HepG2 (cell line): ENCODE measurements at regions of chr1 and their contacts with region 1.

Region 1: DNA sequence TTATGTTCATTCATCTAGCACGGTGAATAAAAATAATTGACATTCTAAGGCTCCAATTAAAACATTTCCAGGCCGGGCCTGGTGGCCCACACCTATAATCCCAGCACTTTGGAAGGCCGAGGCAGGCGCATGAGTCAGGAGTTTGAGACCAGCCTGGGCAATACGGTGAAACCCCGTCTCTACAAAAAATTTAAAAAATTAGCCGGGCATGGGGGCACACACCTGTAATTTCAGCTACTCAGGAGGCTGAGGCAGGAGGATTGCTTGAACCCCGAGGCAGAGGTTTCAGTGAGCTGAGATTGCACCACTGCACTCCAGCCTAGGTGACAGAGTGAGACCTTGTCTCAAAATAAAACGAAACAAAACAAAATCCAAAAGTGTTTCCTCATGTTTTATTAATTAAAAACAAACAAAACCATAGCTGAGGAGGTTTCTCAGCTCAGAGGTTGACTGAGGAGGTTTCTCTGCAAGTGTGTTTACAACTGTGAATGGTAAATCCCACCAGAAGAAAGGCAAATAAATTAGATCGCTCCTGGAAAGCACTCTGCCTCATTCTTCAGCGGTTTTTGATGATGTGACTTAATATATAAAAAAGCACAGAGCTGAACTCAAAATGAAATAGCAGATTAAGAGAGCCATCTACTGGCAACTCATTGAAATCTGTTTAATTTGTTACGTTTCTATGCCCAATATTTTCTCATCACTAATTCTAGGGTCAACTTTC is 37.7 kb upstream of the ATG4C start:
- DNase-seq: peak; percentile 48
- ATAC-seq: no peak; the same call in 2 of the 3 replicates
- H3K4me3 ChIP-seq: no peak overlapping the region
- H3K27ac ChIP-seq: no peak overlapping the region
- H3K4me1 ChIP-seq: peaks cover 10% of the 10 kb centered on the region; the same call in 1 of the 2 replicates
- H3K27me3 ChIP-seq: no peaks in the 10 kb centered on the region
- CTCF ChIP-seq: peak; percentile 64
- EP300 ChIP-seq: no peak
- POLR2A ChIP-seq: no peak
- RAD21 ChIP-seq: peak; percentile 71

Region 2: DNA sequence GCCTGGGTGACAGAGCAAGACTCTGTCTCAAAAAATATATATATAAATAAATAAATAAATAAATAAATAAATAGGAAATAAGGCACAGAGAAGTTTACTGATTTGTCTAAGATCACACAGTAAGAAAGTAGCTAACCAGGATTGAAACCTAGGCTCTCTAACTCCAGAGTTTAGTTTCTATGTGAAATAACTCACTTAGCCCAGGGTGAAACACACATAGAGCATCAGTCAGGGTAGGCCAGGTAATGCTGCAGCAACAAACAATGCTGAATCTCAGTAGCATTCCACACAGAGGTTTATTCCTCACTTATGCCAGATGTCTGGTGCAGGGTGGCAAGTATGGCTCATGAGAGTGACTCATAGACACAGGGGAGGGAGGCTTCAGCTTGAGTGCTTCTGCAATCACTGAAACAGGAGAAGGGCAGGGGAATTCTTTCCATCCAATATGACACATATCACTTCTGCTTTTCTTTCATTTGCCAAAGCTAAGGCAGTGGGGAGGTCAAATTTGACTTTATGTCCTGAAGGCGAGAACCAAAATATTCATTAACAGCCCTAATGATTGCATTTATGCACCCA is 389.9 kb before region 1 on chr1:
- CTCF ChIA-PET with region 1: no interaction called
- POLR2A ChIA-PET with region 1: no interaction called
- in situ Hi-C with region 1: no loop called
- intact Hi-C with region 1: no loop called
- DNase-seq: no peak
- ATAC-seq: no peak
- H3K4me3 ChIP-seq: no peak overlapping the region
- H3K27ac ChIP-seq: no peak overlapping the region
- H3K4me1 ChIP-seq: peaks cover 37% of the 10 kb centered on the region
- H3K27me3 ChIP-seq: no peaks in the 10 kb centered on the region
- CTCF ChIP-seq: no peak
- EP300 ChIP-seq: no peak
- POLR2A ChIP-seq: no peak
- RAD21 ChIP-seq: no peak

Region 3: DNA sequence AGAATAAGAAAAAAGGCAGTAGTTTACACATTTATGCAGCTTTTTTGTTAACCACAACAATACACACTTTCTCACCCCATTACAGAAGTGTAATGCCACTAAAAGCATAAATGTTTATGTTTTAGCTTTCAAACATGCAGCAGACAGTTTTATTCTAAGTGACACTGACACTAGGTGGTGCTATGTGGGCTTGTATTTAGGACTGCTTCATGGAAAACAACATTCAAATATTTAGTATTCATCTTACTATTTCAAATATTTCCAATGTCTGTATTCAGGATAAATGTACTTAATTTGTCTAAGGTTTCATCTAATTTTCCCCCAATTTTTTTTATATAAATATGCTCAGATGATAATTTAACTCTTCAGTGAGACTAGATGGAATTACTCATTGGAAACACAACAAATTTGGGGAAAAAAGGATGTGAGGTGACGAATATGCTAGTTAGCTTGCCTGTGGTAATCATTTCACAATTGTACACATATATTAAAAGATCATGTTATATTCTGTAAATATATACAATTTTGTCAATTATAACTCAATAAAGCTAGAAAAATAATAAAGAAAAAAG is 238.0 kb before region 1 on chr1:
- CTCF ChIA-PET with region 1: interaction called, 16 read pairs
- POLR2A ChIA-PET with region 1: no interaction called
- in situ Hi-C with region 1: no loop called
- intact Hi-C with region 1: loop called (anchors 1 kb)
- DNase-seq: peak; percentile 48
- ATAC-seq: no peak
- H3K4me3 ChIP-seq: no peak overlapping the region
- H3K27ac ChIP-seq: no peak overlapping the region
- H3K4me1 ChIP-seq: peaks cover 8% of the 10 kb centered on the region; the same call in 1 of the 2 replicates
- H3K27me3 ChIP-seq: no peaks in the 10 kb centered on the region
- CTCF ChIP-seq: peak; percentile 69
- EP300 ChIP-seq: no peak
- POLR2A ChIP-seq: no peak
- RAD21 ChIP-seq: peak; percentile 54

Region 4: DNA sequence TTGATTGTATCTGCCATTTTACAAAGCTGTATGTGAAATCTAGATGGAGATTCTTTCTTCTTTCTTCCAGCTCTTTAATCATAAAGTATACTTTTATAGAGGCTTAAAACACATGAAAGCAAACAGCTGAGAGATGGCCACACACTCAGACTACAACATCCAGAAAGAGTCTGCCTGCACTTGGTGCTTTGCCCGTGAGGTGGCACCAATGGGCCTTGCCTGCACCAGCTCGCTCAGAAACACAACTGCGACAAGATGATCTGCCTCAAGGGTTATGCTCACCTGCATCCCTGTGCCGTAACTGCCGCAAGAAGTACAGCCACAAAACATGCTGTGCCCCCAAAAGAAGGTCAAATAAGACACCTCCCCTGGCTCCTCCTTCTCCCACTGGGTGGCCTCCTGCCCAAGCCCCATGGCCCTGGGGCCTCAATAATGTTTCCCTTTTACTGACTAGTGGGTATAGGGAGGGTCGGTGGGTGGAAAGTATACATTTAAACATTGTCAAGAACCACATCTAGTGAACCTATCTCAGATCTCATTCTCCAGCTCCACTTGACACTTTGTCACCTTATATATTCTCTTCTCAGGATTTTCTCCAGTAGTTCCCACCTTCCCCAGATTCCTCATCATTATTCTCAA is 215.6 kb before region 1 on chr1:
- CTCF ChIA-PET with region 1: interaction called, 15 read pairs
- POLR2A ChIA-PET with region 1: interaction called, 5 read pairs
- in situ Hi-C with region 1: loop called (anchors 10 kb)
- intact Hi-C with region 1: loop called (anchors 1 kb)
- DNase-seq: peak; percentile 45
- ATAC-seq: peak; percentile 98
- H3K4me3 ChIP-seq: no peak overlapping the region
- H3K27ac ChIP-seq: no peak overlapping the region
- H3K4me1 ChIP-seq: peaks cover 26% of the 10 kb centered on the region
- H3K27me3 ChIP-seq: no peaks in the 10 kb centered on the region
- CTCF ChIP-seq: peak; percentile 77
- EP300 ChIP-seq: no peak
- POLR2A ChIP-seq: no peak
- RAD21 ChIP-seq: peak; percentile 71

Region 5: GRCh38 chr1:62676611-62677356 is 69.5 kb before region 1 on chr1:
- CTCF ChIA-PET with region 1: no interaction called
- POLR2A ChIA-PET with region 1: no interaction called
- in situ Hi-C with region 1: no loop called
- intact Hi-C with region 1: no loop called
- DNase-seq: no peak
- ATAC-seq: no peak
- H3K4me3 ChIP-seq: no peak overlapping the region
- H3K27ac ChIP-seq: no peak overlapping the region
- H3K4me1 ChIP-seq: peaks cover 59% of the 10 kb centered on the region
- H3K27me3 ChIP-seq: no peaks in the 10 kb centered on the region
- CTCF ChIP-seq: no peak
- EP300 ChIP-seq: no peak
- POLR2A ChIP-seq: no peak
- RAD21 ChIP-seq: no peak